K562 (cell line): ENCODE measurements at regions of chr6 and their contacts with region 1.

Region 1: DNA sequence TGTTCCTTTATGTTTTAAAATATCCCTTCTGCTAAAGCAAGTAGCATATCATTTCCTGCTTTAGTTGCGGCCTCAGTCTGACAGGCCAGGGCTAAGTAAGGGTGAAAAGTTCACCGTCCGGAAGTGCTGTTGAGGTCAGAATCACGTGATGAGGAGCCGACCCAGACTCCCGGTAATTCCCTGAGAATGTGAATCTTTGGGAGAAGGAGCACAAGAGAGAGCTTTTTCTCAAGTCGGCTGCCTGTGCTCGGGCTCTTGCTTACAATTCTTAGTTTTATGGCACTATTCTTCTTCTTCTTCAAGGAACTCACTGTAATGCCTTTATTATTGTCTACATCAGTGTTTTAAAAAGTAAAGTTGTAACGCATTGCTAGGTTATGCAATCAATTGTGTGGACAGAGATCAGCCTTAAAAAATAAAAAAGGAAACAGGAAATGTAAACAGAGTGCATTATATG is 309.3 kb downstream of the PRL start:
- DNase-seq: peak; percentile 35 to 85 (median 58)
- ATAC-seq: peak; percentile 84
- H3K4me3 ChIP-seq: no peak overlapping the region
- H3K27ac ChIP-seq: peak overlapping the region; percentile 63
- H3K4me1 ChIP-seq: peaks cover 0 to 27% of the 10 kb centered on the region in 2 experiments; a peak in 4 of 5 replicates
- H3K27me3 ChIP-seq: no peaks in the 10 kb centered on the region
- CTCF ChIP-seq: no peak
- EP300 ChIP-seq: peak; percentile 67
- POLR2A ChIP-seq: no peak
- RAD21 ChIP-seq: 0 out of 4 replicates have a peak, but pooled peaks of 1 of the 2 experiments have one; percentile 12

Region 2: GRCh38 chr6:21965016-21965415 is 22.5 kb before region 1 on chr6:
- CTCF ChIA-PET with region 1: no interaction called
- POLR2A ChIA-PET with region 1: no interaction called
- in situ Hi-C with region 1: no loop called
- intact Hi-C with region 1: no loop called
- DNase-seq: peak in 1 of 4 experiments; percentile 32
- ATAC-seq: no peak
- H3K4me3 ChIP-seq: no peak overlapping the region
- H3K27ac ChIP-seq: no peak overlapping the region
- H3K4me1 ChIP-seq: peaks cover 0 to 3% of the 10 kb centered on the region in 2 experiments; a peak in 2 of 5 replicates
- H3K27me3 ChIP-seq: no peaks in the 10 kb centered on the region
- CTCF ChIP-seq: no peak
- EP300 ChIP-seq: no peak
- POLR2A ChIP-seq: no peak
- RAD21 ChIP-seq: no peak

Region 3: DNA sequence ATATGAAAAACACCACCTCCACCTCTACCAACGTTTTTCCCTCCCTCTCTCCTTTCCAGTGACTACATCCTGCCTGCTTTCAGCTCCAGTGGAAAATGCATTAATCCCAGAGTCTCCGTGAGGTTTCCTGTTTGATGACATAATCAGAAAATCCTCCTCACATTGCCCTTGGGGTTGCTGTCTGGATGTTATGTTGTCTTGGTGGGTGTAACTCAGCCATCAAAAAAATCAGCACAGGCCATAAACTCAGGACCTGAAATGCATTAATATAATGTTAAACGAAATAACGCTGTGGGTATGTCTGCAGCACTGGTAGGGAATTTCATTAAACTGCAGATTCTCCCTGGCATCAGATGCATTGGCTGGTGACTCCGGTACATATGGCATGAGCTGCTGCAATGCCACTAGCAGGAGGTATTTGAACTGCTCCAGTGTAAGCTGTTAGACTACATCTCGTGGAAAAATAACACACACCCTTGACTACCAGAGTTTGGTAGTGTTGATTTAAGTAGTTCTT is 11.5 kb after region 1 on chr6:
- CTCF ChIA-PET with region 1: no interaction called
- POLR2A ChIA-PET with region 1: interaction called, 15 read pairs
- in situ Hi-C with region 1: no loop called
- intact Hi-C with region 1: no loop called
- DNase-seq: no peak
- ATAC-seq: no peak
- H3K4me3 ChIP-seq: no peak overlapping the region
- H3K27ac ChIP-seq: no peak overlapping the region
- H3K4me1 ChIP-seq: peaks cover 0 to 43% of the 10 kb centered on the region in 2 experiments; a peak in 3 of 5 replicates
- H3K27me3 ChIP-seq: no peaks in the 10 kb centered on the region
- CTCF ChIP-seq: no peak
- EP300 ChIP-seq: no peak
- POLR2A ChIP-seq: no peak
- RAD21 ChIP-seq: no peak

Region 4: DNA sequence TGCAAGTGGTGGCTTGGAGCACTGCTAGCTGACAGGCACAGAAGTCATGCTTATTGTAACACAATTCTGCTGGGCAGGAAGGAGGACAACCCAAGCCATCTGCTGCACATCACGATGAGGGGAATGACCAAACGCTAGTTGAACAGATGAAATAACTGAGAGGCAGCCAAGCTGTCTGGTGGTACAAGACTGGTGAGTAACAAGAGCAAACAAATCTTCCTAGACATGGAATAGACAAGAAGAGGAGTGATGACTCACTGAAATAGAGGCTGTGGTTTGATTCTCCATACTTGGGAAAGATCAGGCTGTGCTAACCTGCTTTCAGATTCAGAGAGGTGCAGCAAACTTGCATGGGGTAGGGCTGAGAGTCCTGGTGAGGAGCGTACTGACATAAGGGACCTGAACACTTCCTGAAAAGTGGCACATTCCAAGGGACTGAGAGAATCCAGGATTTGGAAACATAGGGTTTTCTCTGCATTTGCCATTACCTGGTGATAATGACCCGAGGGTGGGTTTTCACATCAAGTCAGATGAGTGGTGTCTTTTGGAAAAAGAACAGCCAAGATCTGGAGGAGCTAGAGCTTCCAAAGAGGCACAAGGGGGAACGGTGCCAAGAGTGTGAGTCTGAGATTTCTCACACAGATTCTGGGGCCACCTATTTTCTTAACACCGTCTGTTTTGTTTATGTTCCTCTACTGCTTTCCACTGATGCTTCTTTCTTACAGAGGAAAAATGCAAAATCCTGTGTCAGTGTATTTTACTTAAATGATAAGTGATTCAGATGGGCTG is 249.3 kb after region 1 on chr6:
- CTCF ChIA-PET with region 1: no interaction called
- POLR2A ChIA-PET with region 1: no interaction called
- in situ Hi-C with region 1: no loop called
- intact Hi-C with region 1: no loop called
- DNase-seq: no peak
- ATAC-seq: no peak
- H3K4me3 ChIP-seq: no peak overlapping the region
- H3K27ac ChIP-seq: no peak overlapping the region
- H3K4me1 ChIP-seq: no peaks in the 10 kb centered on the region
- H3K27me3 ChIP-seq: no peaks in the 10 kb centered on the region
- CTCF ChIP-seq: no peak
- EP300 ChIP-seq: no peak
- POLR2A ChIP-seq: no peak
- RAD21 ChIP-seq: no peak